ENCODE measurements at regions of chr18 and their contacts with region 1.

Region 1: DNA sequence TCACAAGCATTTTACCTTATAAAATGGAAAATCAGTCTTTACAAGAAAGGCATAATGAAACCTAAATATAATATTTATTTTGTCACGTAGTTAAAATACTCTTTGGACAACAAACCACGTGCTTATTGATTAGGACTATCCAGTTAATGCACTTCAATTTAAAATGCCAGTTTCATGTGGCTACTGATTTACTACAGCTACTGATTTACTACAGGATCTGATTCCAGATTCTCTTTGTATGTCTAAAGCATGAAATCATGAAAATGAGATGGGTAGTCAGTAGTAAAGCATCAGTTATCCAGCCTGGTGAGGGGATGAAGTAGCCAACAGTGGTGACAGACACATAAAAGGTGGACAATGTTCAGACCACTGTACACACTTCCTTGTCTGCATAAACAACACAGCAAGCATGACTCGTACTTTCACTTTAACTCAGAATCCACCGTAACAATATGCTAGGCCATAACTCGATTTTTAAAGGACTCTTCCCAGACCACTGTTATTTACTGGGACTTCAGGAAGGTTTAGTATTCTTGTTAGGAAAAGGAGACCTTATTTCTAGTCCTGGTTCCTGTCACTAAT is 24.9 kb downstream of the ACAA2 start:
- DNase-seq: no peak
- H3K4me3 Mint-ChIP-seq: peak overlapping the region; percentile 8
- H3K27ac Mint-ChIP-seq: peak overlapping the region; percentile 24
- H3K4me1 Mint-ChIP-seq: peaks cover 52% of the 10 kb centered on the region
- H3K27me3 Mint-ChIP-seq: no peaks in the 10 kb centered on the region

Region 2: GRCh38 chr18:49697757-49698524 is 90.5 kb before region 1 on chr18:
- CTCF ChIA-PET with region 1: no interaction called
- POLR2A ChIA-PET with region 1: no interaction called
- intact Hi-C with region 1: no loop called
- DNase-seq: no peak
- H3K4me3 Mint-ChIP-seq: no peak overlapping the region
- H3K27ac Mint-ChIP-seq: no peak overlapping the region
- H3K4me1 Mint-ChIP-seq: no peaks in the 10 kb centered on the region
- H3K27me3 Mint-ChIP-seq: no peaks in the 10 kb centered on the region

Region 3: DNA sequence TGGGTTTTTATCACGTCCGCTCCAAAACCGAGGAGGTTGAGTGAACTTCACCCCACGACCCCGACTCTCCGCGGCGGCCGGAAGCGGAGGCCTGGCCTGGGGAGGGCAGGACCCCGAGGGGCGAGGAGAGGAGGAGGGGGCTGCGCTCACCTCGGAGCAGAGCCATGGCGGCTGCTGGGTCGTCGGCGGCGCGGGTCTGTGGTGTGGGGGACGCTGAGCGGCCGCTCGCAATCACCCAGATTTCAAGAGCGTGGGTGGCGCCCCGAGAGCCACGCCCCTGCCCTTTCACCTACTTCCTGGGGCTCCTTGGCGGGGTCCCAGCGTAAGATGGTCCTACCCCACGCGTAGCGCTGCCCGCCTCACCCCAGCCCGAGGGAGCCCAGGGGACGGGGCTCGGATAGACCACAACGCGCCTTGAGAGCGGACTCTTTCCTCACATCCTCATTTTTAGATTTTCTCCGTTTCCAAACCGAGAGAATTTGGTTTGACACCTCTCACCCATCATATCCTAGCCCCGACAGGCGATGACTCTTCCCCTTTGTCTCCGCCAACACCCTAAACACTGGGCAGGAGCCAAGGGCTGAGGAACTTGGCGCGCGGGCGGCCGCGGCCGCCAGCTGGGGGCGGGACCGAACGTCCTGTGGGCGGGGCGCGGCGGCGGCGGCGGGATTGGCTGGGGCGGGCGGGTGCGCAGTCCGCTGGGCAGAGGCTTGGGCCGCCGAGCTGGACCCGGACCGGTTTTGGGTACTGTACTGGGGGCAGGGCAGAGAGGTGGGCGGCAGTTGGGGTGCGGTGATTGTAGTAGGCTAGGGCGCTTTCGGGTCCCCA is 25.1 kb after region 1 on chr18 and contains the start of gene ACAA2:
- CTCF ChIA-PET with region 1: interaction called, 3 read pairs
- POLR2A ChIA-PET with region 1: no interaction called
- intact Hi-C with region 1: loop called (anchors 2 kb)
- DNase-seq: peak; percentile 90
- H3K4me3 Mint-ChIP-seq: peak within 1 kb of the TSS; percentile 91
- H3K27ac Mint-ChIP-seq: peak within 1 kb of the TSS; percentile 95
- H3K4me1 Mint-ChIP-seq: peaks cover 45% of the 10 kb centered on the region
- H3K27me3 Mint-ChIP-seq: no peaks in the 10 kb centered on the region
- total RNA-seq, gene ACAA2: 77.9 to 78.4 TPM

Measured in activated CD4-positive, alpha-beta memory T cell treated with anti-CD3 and anti-CD28 coated beads for 36 hours (primary cell).